BJ (cell line): ENCODE measurements at regions of chr5 and their contacts with region 1.

Region 1: DNA sequence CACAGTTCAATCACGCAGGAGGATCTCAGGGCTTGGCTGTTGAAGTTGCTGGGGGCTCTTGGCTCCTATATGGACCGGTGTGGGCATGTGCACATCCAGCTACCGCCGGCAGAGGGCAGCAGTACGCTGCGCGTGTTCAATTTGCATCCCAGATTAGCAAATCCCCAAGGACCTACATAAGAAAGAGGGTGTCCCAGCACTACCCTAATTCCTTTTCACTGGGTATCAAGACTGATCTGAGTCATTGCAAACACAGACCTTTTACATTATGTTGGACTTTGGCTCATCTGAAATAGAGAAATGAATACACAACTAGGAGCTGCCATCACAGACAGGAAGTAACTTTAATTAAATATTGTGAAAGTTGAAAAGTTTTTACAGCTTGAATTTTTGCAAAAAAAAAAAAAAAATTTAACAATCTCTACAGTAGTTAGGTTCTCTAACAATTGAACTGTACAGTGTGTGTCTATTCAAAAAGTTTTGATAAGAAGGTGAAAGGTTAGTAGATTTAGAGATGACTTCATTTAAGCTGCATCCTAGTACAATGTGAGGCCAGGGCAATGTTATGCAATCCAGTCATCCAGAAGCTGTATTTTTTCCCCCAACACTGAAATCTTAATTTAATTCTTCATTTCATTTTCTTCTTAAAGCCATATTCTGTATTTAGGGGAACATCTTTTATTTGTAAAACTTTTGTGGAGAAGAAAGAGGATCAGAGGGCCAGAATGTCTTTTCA is 404.0 kb downstream of the EBF1 start:
- DNase-seq: peak; percentile 31
- H3K4me3 ChIP-seq: no peak overlapping the region
- H3K27me3 ChIP-seq: no peaks in the 10 kb centered on the region
- CTCF ChIP-seq: peak; percentile 93

Region 2: GRCh38 chr5:158170060-158170459 is 525.7 kb before region 1 on chr5:
- CTCF ChIA-PET with region 1: interaction called, 22 read pairs
- POLR2A ChIA-PET with region 1: no interaction called
- DNase-seq: no peak
- H3K4me3 ChIP-seq: no peak overlapping the region
- H3K27me3 ChIP-seq: no peaks in the 10 kb centered on the region; the same call in 1 of the 2 replicates
- CTCF ChIP-seq: no peak

Region 3: DNA sequence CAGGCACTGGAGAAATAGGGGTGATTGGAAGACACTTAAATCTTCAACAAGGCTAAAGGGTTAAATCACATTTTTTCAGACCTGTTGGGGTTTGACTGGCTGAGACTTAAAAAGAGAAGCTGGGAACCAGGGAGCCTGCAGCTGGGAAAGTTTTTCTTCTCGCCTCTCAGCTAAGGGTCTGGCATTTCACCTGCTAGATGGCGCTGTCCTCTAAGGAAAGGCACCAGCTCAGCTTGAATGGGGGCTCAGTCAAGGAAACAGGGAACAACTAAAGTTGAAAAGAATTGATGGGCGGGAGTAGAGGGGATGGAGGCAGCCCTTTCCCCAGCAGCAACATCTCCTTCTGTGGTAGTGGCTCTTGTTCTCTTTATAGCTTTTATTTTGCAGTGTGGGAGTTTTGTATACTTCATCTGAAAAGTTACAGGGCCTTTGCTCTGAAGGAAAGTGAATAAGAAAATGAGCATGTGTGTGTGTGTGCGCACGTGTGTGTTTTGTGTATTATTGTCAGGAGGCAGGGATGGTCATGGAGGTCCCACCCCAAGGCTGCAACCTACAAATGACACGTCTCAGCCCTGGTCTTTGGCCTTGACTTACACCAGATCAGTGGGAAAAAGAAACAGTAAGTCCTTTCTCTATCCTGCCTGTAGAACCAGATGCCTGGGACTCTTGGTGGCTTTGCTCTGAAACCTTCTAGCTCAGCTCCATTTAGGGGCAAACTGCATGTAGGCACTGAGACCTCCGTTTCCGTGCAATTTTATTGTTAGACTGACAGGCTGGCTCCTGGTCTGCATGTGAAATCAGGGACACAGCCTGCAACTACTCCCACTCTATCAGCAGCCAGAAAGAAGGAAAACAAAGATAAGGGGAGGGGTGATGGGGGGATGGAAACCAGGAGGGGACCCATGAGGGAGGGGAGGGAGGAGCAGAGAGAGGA is 520.6 kb before region 1 on chr5:
- CTCF ChIA-PET with region 1: interaction called, 22 read pairs
- POLR2A ChIA-PET with region 1: no interaction called
- DNase-seq: no peak
- H3K4me3 ChIP-seq: no peak overlapping the region
- H3K27me3 ChIP-seq: no peaks in the 10 kb centered on the region; the same call in none of the 2 replicates
- CTCF ChIP-seq: peak; percentile 83

Region 4: DNA sequence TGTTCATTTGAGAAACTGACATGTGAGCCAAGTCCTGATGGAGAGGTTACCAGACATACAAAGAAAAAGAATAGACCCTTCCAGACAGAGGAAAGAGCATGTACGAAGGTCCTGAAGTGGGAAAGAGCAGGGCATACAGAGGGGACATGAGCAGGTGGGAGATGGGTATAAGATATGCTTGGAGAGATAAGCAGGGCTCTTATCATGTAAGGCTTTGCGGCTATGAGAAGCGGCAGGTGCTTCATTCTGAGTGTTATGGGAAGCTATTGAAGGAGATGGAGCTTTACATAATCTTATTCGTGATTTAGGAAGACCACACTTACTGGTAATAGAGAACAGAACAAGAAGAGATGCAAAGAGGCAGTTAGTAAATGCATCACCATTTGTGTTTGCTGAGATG is 13.1 kb before region 1 on chr5:
- CTCF ChIA-PET with region 1: interaction called, 17 read pairs
- POLR2A ChIA-PET with region 1: no interaction called
- DNase-seq: no peak
- H3K4me3 ChIP-seq: no peak overlapping the region
- H3K27me3 ChIP-seq: no peaks in the 10 kb centered on the region; the same call in 1 of the 2 replicates
- CTCF ChIP-seq: no peak

Region 5: GRCh38 chr5:159106569-159107282 is 411.0 kb after region 1 on chr5:
- CTCF ChIA-PET with region 1: interaction called, 237 read pairs
- POLR2A ChIA-PET with region 1: no interaction called
- DNase-seq: no peak
- H3K4me3 ChIP-seq: peak overlapping the region; percentile 27
- H3K27me3 ChIP-seq: peaks cover 23% of the 10 kb centered on the region
- CTCF ChIP-seq: peak; percentile 91

Region 6: DNA sequence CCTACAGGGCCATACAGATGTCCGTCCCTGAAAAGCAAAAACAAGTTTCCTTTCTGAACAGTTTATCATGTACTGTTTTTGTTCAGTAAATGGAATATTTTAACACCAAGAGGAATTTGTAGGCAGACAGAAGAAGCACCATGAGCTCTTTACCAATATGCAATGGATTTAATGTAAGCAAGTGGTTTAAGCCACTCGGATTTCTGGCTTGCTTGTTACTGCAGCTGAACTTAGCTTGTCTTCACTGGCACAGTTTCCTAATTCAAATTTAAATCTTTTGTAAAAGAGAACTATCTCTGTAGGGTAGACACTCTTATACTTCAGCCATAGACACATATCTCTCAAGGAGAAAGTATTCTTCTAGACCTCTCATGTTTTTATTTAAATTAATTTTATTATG is 416.7 kb after region 1 on chr5:
- CTCF ChIA-PET with region 1: interaction called, 237 read pairs
- POLR2A ChIA-PET with region 1: no interaction called
- DNase-seq: no peak
- H3K4me3 ChIP-seq: no peak overlapping the region
- H3K27me3 ChIP-seq: 0 out of 2 replicates have a peak, but pooled peaks cover 2% of the 10 kb centered on the region
- CTCF ChIP-seq: no peak